Caco-2 (cell line): ENCODE measurements at regions of chr11 and their contacts with region 1.

Region 1: GRCh38 chr11:46489661-46490560 is 98.3 kb upstream of the CHRM4 start:
- DNase-seq: peak; percentile 56 to 63
- H3K4me3 ChIP-seq: no peak overlapping the region
- H3K4me3 Mint-ChIP-seq: no peak overlapping the region
- H3K27ac Mint-ChIP-seq: no peak overlapping the region
- H3K4me1 ChIP-seq: peaks cover 1% of the 10 kb centered on the region
- H3K4me1 Mint-ChIP-seq: peaks cover 3% of the 10 kb centered on the region
- H3K27me3 ChIP-seq: no peaks in the 10 kb centered on the region
- H3K27me3 Mint-ChIP-seq: no peaks in the 10 kb centered on the region
- CTCF ChIP-seq: peak; percentile 57 to 86

Region 2: GRCh38 chr11:46475926-46476545 is 13.9 kb before region 1 on chr11:
- CTCF ChIA-PET with region 1: interaction called, 15 read pairs
- POLR2A ChIA-PET with region 1: no interaction called
- intact Hi-C with region 1: no loop called
- DNase-seq: no peak
- H3K4me3 ChIP-seq: no peak overlapping the region
- H3K4me3 Mint-ChIP-seq: no peak overlapping the region
- H3K27ac Mint-ChIP-seq: no peak overlapping the region
- H3K4me1 ChIP-seq: peaks cover 23% of the 10 kb centered on the region
- H3K4me1 Mint-ChIP-seq: peaks cover 25% of the 10 kb centered on the region
- H3K27me3 ChIP-seq: no peaks in the 10 kb centered on the region
- H3K27me3 Mint-ChIP-seq: no peaks in the 10 kb centered on the region
- CTCF ChIP-seq: no peak

Region 3: DNA sequence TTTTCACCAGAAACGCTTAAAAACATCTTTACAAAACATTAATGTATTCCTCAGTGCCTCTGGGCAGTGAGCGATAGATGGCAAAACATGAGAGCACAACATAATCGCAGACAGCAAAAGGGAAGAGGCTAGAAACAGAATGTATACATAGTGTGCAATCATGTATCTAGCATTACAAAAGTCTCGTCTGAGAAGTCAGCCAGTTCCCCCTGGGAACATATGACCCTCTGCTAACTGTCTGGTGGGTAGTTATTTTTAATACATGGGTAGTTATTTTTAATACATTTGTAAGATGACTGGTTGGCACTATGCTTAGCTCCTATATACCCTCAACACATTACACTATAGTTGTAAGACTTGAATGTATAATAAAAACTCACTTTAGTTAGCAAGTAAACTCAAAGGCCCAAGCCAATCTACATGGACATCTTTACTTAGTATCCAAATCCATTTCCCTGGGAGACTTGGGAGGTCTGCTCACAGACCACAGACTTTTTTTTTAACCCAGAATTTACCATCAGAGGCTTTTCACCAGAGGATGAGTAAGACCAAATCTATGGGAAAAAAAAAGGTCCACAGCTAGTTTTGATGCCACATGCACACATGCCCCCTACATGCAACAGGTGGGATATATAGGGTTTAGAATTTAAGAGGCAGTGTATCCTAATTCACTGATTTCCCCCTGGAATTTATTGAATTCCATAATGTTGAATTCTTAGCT is 32.2 kb after region 1 on chr11:
- CTCF ChIA-PET with region 1: interaction called, 11 read pairs
- POLR2A ChIA-PET with region 1: no interaction called
- intact Hi-C with region 1: no loop called
- DNase-seq: no peak
- H3K4me3 ChIP-seq: no peak overlapping the region
- H3K4me3 Mint-ChIP-seq: no peak overlapping the region
- H3K27ac Mint-ChIP-seq: no peak overlapping the region
- H3K4me1 ChIP-seq: peaks cover 18% of the 10 kb centered on the region
- H3K4me1 Mint-ChIP-seq: peaks cover 6% of the 10 kb centered on the region
- H3K27me3 ChIP-seq: no peaks in the 10 kb centered on the region
- H3K27me3 Mint-ChIP-seq: no peaks in the 10 kb centered on the region
- CTCF ChIP-seq: peak in 1 of 2 experiments; percentile 43

Region 4: DNA sequence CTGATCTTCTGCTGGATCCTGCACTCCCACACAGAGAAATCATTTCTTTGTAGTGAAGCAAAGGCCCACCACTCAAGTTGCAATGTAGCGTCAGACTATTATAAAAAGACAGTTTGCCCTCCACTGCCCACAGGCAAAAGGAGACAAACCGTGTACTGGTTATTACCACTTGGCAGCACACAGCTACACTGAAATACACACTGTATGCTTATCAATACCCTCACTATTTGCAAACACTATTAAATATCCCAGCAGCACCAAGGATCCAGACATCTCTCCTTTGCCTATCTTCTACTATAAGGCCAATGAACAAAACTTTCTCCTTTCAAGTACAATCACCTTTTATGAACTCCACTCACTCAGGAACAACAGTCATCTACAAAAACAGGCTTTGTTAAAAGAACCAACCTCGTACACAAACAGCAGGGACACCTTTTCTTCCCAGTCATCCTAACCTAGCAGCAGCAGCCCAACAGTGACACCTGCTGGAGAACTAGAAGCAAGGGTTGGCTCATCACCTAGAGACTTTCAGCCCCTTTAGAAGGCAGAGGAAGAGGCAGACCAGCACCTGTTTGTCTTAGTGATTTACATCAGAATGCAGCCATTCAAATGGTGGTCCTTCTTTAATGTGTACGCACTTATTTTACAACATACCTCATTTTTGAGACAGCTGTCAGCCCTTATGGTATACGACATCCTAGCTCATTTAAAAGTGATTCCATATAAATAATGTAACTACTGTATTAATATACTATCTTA is 47.8 kb after region 1 on chr11:
- CTCF ChIA-PET with region 1: interaction called, 16 read pairs
- POLR2A ChIA-PET with region 1: no interaction called
- intact Hi-C with region 1: loop called (anchors 1 kb)
- DNase-seq: peak; percentile 79 to 80
- H3K4me3 ChIP-seq: no peak overlapping the region
- H3K4me3 Mint-ChIP-seq: no peak overlapping the region
- H3K27ac Mint-ChIP-seq: peak overlapping the region; percentile 23
- H3K4me1 ChIP-seq: peaks cover 10% of the 10 kb centered on the region; the same call in 1 of the 2 replicates
- H3K4me1 Mint-ChIP-seq: peaks cover 22% of the 10 kb centered on the region
- H3K27me3 ChIP-seq: no peaks in the 10 kb centered on the region
- H3K27me3 Mint-ChIP-seq: no peaks in the 10 kb centered on the region
- CTCF ChIP-seq: peak; percentile 90 to 94